ENCODE measurements at regions of chr19 and their contacts with region 1.

Region 1: DNA sequence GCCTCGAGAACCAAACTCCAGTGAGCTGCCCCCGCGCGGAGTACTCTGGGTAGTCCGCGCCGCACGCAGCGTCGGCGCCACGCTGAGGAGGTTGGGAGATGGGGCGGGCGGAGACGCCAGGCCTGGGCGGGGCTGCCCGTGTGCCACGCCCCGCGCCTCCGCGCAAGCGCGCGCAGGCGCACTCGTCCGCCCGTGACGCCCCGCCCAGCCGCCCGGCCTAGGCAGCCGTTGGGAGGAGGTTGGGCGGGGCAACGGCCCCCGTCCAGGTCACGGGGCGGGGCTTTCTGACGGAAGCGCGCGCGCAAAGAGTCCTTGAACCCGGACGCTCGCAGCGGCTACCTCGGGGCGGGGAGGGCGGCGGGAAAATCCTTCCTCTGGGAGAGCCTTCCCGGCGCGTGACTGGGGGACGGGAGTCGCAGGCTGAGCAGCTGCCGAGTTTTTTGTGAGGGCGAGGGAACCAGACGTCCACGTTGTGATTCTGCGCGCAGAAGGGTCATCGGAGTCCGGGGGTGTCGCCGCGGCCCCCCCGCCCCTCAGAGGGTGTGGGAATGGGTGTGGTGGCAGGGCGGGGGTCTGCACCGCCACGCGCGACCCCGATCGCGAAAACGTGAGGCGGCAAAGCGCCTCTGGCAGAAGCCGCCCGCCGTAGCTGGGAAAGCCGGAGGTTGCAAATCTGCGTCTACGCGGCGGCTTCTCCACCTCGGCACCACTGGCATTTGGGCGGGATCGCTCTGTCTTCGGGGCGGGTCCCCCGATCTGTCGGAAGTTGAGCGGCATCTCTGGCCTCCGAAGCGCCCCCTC is at the start of gene MED26:
- DNase-seq: peak; percentile 96 to 98
- H3K4me3 ChIP-seq: peak within 1 kb of the TSS; percentile 95 to 100 (median 96)
- H3K27ac ChIP-seq: peak within 1 kb of the TSS; percentile 93 to 99 (median 98)
- H3K4me1 ChIP-seq: peaks cover 33 to 54% (median 44%) of the 10 kb centered on the region in 4 donors
- H3K27me3 ChIP-seq: no peaks in the 10 kb centered on the region
- CTCF ChIP-seq: no peak
- EP300 ChIP-seq: no peak
- POLR2A ChIP-seq: no peak
- total RNA-seq, gene MED26: 0.58 to 41.7 (median 6.2) TPM

Region 2: DNA sequence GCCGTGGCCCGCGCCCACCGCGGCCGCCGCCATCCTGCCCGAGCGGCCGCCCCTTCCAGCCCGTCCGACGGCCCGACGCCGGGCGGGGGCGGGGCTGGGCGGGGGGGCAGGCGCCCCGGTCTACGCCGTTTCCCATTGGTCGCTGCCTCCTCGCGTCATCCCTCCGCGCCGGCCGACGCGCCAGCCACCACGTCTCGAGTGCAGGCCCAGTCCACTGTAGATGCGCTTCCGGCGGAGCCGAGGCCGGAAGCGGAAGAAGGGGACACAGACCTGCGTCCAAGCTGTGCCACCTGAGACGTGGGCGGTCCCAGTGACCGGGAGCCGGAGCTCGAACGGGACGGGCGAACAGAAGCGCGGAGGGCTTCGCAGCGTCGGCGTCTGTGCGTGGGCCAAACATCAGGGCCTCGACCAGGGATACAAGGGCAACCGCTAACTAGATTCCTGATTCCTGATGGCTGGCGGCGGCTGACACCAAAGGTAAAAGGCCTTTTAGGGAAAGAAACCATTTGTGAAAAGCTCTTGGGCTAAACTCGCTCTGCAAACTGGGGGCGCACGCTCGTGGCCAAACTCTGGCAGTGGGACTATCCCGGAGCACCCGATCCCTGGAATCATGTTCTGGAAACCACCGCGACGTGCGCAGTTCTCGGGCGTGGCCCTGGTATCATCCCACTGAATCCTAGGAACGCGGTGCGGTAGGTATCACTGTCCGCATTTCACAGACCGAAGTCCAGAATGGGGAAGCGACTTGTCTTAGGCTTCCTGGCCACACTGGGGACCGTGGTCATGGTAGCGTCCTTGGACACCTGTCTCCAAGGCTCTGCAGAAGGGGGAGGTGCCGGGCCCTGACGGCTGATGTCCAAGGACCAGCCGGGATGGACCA is 55.8 kb before region 1 on chr19 and contains the start of gene SLC35E1:
- intact Hi-C with region 1: loop called (anchors 5 kb)
- DNase-seq: peak; percentile 97 to 99
- H3K4me3 ChIP-seq: peak within 1 kb of the TSS; percentile 80 to 97 (median 90)
- H3K27ac ChIP-seq: peak within 1 kb of the TSS; percentile 88 to 93 (median 91)
- H3K4me1 ChIP-seq: peaks cover 35 to 70% (median 59%) of the 10 kb centered on the region in 4 donors
- H3K27me3 ChIP-seq: no peaks in the 10 kb centered on the region
- CTCF ChIP-seq: no peak
- EP300 ChIP-seq: no peak
- POLR2A ChIP-seq: peak in 1 of 4 donors; percentile 37
- total RNA-seq, gene SLC35E1: 18.3 to 63.7 (median 52.5) TPM

Region 3: GRCh38 chr19:16671652-16672274 is 43.4 kb after region 1 on chr19:
- intact Hi-C with region 1: no loop called
- DNase-seq: no peak
- H3K4me3 ChIP-seq: no peak overlapping the region
- H3K27ac ChIP-seq: no peak overlapping the region
- H3K4me1 ChIP-seq: peaks cover 0 to 7% (median 2%) of the 10 kb centered on the region in 4 donors
- H3K27me3 ChIP-seq: no peaks in the 10 kb centered on the region
- CTCF ChIP-seq: no peak
- EP300 ChIP-seq: no peak
- POLR2A ChIP-seq: no peak

Measured in stomach (tissue), 19 donors.